ENCODE measurements at regions of chr5 and their contacts with region 1.

Region 1: DNA sequence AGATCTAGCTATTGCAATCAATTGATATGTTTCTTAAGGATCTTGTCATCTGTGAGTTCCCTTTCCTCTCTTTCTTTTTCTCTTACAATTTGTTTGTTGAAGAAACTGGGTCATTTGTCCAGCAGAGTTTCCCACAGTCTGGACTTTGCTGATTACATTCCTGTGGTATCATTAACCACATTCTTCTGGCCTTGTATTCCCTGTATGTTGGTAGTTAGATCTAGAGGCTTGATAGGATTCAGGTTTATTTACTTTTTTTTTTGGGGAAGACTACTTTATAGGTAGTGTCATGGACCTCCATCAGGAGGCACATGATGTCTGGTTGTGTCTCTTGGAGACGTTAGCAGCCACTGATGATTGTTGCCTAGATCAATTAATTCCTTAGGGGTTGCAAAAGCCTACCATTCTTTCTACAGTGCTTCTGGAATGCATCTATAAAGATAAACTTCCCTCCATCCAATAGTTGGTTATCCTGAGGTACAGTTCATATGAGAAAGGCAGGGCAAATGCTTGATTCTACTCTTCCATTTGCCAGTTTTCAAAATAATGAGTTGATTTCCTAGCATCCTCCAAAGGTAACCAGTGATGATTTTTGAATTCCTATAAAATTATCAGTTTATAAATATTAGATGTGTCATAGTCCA is 14.4 kb downstream of the PDE8B start:
- DNase-seq: peak; percentile 10 to 71
- H3K4me3 ChIP-seq: no peak overlapping the region
- H3K27ac ChIP-seq: no peak overlapping the region
- H3K4me1 ChIP-seq: 0 out of 2 replicates have a peak, but pooled peaks cover 12% of the 10 kb centered on the region
- H3K27me3 ChIP-seq: peaks cover 30% of the 10 kb centered on the region; the same call in 1 of the 2 replicates
- CTCF ChIP-seq: no peak

Region 2: GRCh38 chr5:77168161-77168875 is 56.5 kb before region 1 on chr5:
- CTCF ChIA-PET with region 1: no interaction called
- POLR2A ChIA-PET with region 1: no interaction called
- intact Hi-C with region 1: loop called (anchors 5 kb)
- DNase-seq: peak in 1 of 2 experiments; percentile 11
- H3K4me3 ChIP-seq: no peak overlapping the region
- H3K27ac ChIP-seq: peak overlapping the region; percentile 55
- H3K4me1 ChIP-seq: peaks cover 22% of the 10 kb centered on the region
- H3K27me3 ChIP-seq: no peaks in the 10 kb centered on the region
- CTCF ChIP-seq: no peak